Kidney (tissue), 22 donors: ENCODE measurements at regions of chr17 and their contacts with region 1.

Region 1: DNA sequence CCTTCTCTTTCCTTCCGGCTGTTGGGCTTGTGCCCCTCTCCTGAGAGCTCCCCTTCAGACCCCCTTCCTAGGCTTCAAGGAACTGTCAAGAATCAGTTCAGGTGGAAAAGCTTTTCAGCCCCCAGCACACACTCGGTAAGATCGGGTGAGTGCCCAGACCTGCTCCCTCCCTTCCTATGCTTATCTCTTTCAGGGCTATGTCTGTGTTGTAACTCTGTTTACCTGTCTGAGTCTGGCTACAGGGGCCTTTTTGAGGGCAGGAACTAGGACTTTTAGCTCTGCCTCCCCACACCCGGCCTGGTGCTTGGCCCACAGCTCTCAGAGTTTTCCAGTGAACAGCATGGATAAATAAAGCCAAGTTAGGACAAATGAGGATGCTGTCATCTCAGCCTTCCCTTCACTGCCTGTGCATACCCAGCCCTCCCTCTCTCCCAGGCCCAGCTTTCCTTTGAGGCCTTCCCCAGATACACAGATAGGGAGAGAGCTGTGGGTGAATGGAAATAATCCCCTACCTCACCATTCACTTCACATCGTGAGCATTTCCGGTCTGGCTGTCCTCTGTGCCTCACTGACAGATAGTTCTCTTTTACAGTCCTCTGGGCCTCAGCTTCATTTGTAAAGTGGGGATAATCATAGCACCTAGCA is 5.7 kb upstream of the MRPS23 start:
- DNase-seq: no peak
- H3K4me3 ChIP-seq: no peak overlapping the region
- H3K27ac ChIP-seq: no peak overlapping the region
- H3K4me1 ChIP-seq: peaks cover 0 to 17% (median 6%) of the 10 kb centered on the region in 3 donors
- H3K27me3 ChIP-seq: no peaks in the 10 kb centered on the region
- CTCF ChIP-seq: no peak

Region 2: DNA sequence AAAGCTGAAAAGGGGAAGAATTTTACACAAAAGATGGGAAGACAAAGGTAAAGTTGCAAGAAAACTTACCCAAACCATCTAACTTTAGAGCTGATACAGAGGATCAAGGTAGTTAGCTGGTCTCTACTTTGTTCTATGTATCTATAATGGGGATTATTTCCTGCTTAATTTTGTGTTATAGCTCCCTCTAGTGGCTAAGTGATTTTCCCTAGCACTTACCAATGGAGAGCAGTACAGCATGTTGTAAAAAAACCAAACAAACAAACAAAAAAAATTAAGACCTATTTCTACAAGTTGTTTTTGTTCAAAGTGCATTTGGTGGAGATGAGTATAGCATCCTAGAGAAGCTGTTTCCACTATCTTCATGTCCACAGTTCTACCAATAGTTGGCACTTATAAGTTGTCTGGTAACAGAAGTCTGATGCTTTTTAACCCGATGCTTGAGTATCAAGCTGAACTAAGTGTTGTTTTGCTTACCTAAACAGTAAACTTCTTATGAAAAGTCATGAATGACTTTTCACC is 144.0 kb after region 1 on chr17:
- intact Hi-C with region 1: loop called (anchors 5 kb)
- DNase-seq: peak in 2 of 5 donors; percentile 85 to 87
- H3K4me3 ChIP-seq: no peak overlapping the region
- H3K27ac ChIP-seq: peak overlapping the region in 1 of 2 donors; percentile 15
- H3K4me1 ChIP-seq: peaks cover 0 to 15% (median 7%) of the 10 kb centered on the region in 3 donors
- H3K27me3 ChIP-seq: no peaks in the 10 kb centered on the region
- CTCF ChIP-seq: peak; percentile 76

Region 3: GRCh38 chr17:58010067-58010799 is 154.7 kb after region 1 on chr17:
- intact Hi-C with region 1: no loop called
- DNase-seq: no peak
- H3K4me3 ChIP-seq: no peak overlapping the region
- H3K27ac ChIP-seq: no peak overlapping the region
- H3K4me1 ChIP-seq: peaks cover 3 to 14% (median 10%) of the 10 kb centered on the region in 3 donors
- H3K27me3 ChIP-seq: no peaks in the 10 kb centered on the region
- CTCF ChIP-seq: no peak